GM12878 (cell line): ENCODE measurements at regions of chr14 and their contacts with region 1.

Region 1: DNA sequence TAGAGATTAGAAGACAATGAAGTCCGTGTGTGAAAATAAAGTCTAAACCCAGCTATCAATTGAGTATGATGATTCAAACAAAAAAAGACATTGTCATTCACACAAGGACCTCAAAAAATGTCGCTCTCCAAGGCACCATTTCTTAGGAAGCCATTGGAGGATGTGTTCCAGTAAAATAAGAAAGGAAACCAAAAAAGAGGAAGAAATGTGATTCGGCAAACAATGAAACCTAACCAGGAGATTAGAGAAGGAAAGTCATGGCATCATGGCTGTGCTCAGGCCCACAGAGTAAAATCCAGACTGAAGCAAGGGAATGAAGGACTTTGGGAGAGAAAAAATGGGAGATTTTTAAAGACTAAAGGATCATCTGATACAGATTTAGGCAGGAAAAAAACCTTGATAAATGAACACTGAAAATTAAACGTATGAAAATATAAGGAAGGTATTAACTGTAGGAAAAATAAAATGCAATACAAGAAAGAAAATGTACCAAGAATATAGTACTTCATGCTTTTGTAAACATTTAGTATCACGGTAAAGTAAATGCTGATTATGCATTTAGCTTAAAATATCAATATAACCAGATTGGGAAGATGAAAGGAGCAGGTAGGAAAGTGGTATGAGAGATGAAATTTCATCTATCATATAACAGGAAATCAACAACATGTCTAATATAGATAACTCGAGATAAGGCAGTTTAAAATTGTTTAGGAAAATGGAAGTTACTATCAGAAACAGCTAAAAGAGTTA is 38.2 kb upstream of the MTHFD1 start:
- DNase-seq: no peak
- ATAC-seq: no peak
- H3K4me3 ChIP-seq: no peak overlapping the region
- H3K27ac ChIP-seq: no peak overlapping the region
- H3K4me1 ChIP-seq: no peaks in the 10 kb centered on the region
- H3K27me3 ChIP-seq: no peaks in the 10 kb centered on the region
- CTCF ChIP-seq: no peak
- EP300 ChIP-seq: no peak
- POLR2A ChIP-seq: no peak
- RAD21 ChIP-seq: no peak

Region 2: GRCh38 chr14:63777024-63777423 is 572.9 kb before region 1 on chr14:
- CTCF ChIA-PET with region 1: no interaction called
- POLR2A ChIA-PET with region 1: interaction called, 10 read pairs
- RAD21 ChIA-PET with region 1: no interaction called
- SMC1A ChIA-PET with region 1: no interaction called
- in situ Hi-C with region 1: no loop called
- intact Hi-C with region 1: no loop called
- DNase-seq: no peak
- ATAC-seq: no peak
- H3K4me3 ChIP-seq: no peak overlapping the region
- H3K27ac ChIP-seq: no peak overlapping the region
- H3K4me1 ChIP-seq: peaks cover 9% of the 10 kb centered on the region
- H3K27me3 ChIP-seq: no peaks in the 10 kb centered on the region
- CTCF ChIP-seq: no peak
- EP300 ChIP-seq: no peak
- POLR2A ChIP-seq: no peak
- RAD21 ChIP-seq: no peak

Region 3: DNA sequence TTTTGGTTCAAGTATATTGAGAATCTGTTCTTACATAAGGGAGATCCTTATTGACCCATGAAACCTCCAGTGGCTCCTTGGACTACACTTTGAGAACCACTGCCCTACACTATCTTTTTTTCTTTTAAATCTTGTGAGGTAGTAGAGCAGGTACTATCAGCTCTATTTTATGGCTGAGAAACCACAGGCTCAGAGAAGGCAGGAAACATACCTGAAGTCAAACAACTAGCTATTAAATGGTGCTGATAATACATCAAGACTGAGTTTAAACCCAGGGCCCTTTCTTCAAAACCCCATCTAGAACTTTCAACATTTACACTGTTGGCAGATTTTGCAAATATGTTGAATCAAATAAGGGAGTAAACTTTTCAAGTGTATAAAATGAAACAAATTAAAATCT is 146.8 kb after region 1 on chr14:
- CTCF ChIA-PET with region 1: interaction called, 32 read pairs
- POLR2A ChIA-PET with region 1: no interaction called
- RAD21 ChIA-PET with region 1: interaction called, 4 read pairs
- SMC1A ChIA-PET with region 1: interaction called, 6 read pairs
- in situ Hi-C with region 1: no loop called
- intact Hi-C with region 1: no loop called
- DNase-seq: no peak
- ATAC-seq: peak; percentile 10; the same call in 2 of the 3 replicates
- H3K4me3 ChIP-seq: no peak overlapping the region
- H3K27ac ChIP-seq: no peak overlapping the region
- H3K4me1 ChIP-seq: 0 out of 2 replicates have a peak, but pooled peaks cover 3% of the 10 kb centered on the region
- H3K27me3 ChIP-seq: no peaks in the 10 kb centered on the region
- CTCF ChIP-seq: no peak
- EP300 ChIP-seq: no peak
- POLR2A ChIP-seq: no peak
- RAD21 ChIP-seq: no peak